ENCODE measurements at regions of chr11 and their contacts with region 1.

Region 1: DNA sequence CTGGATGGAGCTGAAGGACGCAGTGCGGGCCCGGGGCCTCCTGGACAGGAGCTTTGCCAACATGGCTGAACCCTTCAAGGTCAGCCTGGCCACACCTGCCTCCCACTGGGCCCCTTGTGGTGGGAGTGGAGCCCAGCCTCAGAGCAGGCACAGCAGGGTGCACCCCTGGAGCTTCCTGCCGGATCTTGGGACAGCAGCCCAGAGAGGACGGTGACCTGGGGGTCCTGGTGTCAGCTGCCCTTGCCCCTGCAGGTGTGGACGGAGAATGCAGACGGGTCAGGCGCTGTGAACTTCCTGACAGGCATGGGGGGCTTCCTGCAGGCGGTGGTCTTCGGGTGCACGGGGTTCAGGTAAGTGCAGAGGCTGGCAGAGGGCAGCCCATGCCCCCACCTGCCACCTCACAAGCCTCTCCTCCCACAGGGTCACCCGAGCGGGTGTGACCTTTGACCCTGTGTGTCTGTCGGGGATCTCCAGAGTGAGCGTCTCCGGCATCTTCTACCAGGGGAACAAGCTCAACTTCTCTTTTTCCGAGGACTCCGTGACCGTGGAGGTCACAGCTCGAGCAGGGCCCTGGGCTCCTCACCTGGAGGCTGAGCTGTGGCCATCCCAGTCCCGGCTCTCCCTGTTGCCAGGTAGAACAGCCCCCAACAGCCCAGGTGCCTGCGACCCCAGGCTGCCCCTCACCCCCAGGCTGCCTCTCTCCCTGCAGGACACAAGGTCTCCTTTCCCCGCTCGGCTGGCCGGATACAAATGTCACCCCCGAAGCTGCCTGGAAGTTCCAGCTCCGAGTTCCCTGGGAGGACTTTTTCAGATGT is 5.1 kb downstream of the PGGHG start:
- DNase-seq: no peak
- CTCF ChIP-seq: no peak

Region 2: DNA sequence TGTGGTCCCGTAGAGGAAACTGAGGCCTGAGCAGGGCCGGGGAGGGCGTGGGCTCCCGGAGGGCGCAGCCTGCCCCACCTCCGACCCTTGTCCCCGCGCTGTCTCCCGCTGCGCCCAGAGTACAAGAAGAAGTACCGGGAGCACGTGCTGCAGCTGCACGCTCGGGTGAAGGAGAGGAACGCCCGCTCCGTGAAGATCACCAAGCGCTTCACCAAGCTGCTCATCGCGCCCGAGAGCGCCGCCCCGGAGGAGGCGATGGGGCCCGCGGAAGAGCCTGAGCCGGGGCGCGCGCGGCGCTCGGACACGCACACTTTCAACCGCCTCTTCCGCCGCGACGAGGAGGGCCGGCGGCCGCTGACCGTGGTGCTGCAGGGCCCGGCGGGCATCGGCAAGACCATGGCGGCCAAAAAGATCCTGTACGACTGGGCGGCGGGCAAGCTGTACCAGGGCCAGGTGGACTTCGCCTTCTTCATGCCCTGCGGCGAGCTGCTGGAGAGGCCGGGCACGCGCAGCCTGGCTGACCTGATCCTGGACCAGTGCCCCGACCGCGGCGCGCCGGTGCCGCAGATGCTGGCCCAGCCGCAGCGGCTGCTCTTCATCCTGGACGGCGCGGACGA is 14.0 kb before region 1 on chr11:
- CTCF ChIA-PET with region 1: no interaction called
- POLR2A ChIA-PET with region 1: no interaction called
- DNase-seq: no peak
- CTCF ChIP-seq: no peak

Region 3: DNA sequence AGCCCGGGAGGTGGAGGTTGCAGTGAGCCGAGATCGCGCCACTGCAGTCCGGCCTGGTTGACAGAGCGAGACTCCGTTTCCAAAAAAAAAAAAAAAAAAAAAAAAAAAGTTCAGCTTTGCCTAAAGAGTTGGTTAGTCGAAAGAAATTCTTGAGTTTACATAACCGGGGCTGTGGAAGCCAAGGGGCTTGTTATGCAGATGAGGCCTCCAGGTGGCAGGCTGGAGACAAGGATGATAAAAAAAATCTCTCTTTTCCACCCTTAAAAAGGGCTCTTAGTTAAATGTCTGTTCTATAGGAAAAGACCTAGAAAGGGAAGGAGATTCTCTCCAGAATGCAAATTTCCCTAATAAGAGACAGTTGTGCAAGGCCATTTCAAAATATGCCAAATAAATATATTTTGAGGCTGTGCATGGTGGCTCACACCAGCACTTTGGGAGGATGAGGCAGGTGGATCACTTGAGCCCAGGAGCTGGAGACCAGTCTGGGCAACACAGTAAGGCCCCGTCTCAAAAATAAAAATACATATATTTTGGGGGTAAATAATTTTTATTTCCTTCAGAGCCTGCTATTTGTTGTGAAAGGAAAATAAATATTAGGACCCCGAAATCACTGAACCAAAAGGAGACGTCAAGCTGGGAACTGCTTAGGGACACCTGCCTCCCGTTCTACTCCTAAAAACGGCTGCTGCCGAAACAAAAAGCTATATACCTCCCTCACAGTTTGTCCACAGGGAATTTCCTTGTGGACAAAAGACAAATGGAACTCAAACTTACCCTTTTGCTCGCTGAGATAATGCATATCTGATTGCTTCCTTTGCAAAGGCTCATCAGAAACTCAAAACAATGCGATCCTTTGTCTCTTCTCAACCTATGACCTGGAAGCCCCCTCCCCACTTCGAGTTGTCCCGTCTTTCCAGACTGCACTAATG is 11.1 kb after region 1 on chr11:
- CTCF ChIA-PET with region 1: interaction called, 10 read pairs
- POLR2A ChIA-PET with region 1: no interaction called
- DNase-seq: peak; percentile 73
- CTCF ChIP-seq: peak; percentile 69

Region 4: DNA sequence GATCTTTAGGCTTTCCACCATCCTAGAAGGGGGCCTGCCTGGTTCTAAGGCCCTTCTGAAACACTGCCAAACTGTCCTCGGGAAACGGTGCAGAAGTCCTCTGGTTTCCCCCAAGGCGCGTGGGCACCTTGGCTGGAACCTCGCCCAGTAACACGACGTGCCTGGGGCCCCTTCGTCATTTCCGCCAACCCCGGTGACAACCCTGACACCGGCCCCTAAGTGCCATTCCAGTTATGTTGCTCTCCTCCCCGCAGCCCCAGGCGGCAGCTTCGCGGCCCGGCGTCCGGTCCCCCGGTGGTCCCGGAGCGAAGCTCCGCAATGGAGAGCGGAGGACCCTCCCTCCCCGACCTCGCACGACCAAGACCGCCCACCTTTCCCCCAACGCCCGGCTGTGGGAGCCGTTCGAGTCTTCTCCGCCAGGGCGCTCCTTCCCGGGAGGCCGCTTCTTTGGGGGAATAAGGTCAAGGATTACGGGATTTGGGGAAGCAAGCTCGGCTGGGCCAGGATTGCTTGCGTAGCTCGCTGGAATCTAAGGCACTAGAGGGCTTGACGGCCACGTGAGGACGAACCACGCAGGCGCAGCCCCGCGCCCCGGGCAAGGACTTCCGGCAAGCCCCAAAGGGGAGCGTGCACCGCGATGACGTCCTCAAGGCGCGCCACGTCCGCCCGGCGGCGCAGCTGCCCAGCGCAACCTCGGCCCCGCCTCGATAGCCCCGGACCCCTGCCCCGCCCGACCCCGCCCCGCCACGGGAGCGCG is 212.4 kb after region 1 on chr11:
- CTCF ChIA-PET with region 1: no interaction called
- POLR2A ChIA-PET with region 1: no interaction called
- DNase-seq: peak; percentile 99
- CTCF ChIP-seq: no peak

Measured in GM10248 (cell line).